ENCODE measurements at regions of chr17 and their contacts with region 1.

Region 1: DNA sequence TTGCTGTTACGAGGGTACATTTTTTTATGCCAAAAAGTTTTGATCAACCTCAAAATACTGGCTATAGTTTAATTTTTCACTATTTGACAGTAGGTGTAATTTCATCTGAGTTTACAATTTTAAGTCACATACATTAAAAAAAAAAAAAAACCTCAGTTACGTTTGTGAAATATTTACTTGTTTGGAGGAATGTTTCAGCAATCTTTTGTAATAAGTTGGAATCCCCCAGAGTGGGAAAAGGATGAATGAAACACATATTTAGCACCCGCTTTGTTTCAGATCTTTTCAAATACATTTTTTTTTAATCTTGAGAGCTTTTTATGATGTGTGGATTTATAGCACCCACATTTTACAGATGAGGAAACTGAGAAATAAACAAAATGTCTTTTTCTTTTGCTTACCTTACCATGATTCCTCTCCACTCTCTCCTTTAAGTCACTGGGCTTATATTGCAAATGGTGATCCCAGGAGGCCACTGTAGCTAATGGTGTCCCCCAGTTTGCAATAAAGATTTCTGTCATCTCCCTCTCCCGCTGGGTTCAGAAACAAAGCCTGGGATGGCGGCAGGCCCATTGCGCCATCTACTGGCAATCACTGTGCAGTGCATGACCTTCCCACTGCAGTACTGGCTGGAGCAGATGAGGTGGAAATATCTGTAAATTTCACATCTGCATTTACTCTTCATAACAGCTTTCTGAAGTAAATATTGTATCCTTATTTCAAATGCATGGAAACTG is 27.7 kb downstream of the TBC1D3B start:
- DNase-seq: peak; percentile 81
- ATAC-seq: peak; percentile 95
- H3K4me3 Mint-ChIP-seq: peak overlapping the region; percentile 50
- H3K27ac Mint-ChIP-seq: peak overlapping the region; percentile 67
- H3K4me1 Mint-ChIP-seq: peaks cover 44% of the 10 kb centered on the region
- H3K27me3 Mint-ChIP-seq: peaks cover 17% of the 10 kb centered on the region

Region 2: GRCh38 chr17:35841505-35841904 is 307.2 kb before region 1 on chr17:
- CTCF ChIA-PET with region 1: no interaction called
- DNase-seq: no peak
- ATAC-seq: no peak
- H3K4me3 Mint-ChIP-seq: no peak overlapping the region
- H3K27ac Mint-ChIP-seq: no peak overlapping the region
- H3K4me1 Mint-ChIP-seq: peaks cover 16% of the 10 kb centered on the region
- H3K27me3 Mint-ChIP-seq: no peaks in the 10 kb centered on the region

Region 3: DNA sequence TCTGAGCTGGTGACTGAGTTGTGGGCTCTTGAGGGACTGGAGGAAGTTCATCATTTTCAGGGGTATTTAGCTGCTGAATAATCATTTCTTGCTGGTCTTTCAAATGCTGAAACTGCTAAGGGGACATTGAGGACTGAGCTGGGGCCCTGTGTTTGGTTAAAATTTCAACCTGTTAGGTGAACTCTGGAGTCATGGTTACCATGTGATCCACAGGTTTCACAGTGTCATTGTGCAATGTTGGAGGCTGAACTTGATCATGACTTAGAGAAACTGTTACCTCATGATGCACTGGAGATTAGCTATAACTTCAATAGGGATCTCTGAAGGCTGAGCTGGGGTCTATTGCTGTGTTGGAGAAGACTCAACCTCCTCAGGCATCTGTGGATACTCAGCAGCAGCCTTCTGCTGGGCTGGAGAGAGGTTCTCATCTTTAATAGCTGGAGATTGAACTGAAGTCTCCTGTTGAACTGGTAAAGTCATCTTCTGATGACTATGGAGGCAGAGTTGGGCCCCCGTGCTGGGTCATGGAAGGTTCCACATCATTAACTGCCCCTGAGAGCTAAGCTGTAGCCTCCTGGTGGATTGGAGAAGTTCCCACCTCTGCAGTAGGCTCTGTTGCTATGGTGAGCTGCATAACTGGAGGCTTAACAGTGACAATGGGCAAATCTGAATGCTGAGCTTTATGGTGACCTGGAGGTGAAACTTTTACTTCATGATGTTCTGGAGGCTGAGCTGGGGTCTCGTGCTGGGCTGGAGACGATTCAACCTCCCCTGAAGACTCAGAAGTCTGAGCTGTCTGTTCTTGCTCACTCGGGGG is 233.4 kb before region 1 on chr17:
- CTCF ChIA-PET with region 1: no interaction called
- DNase-seq: no peak
- ATAC-seq: no peak
- H3K4me3 Mint-ChIP-seq: no peak overlapping the region
- H3K27ac Mint-ChIP-seq: no peak overlapping the region
- H3K4me1 Mint-ChIP-seq: peaks cover 43% of the 10 kb centered on the region
- H3K27me3 Mint-ChIP-seq: no peaks in the 10 kb centered on the region

Region 4: GRCh38 chr17:36004594-36005108 is 144.1 kb before region 1 on chr17:
- CTCF ChIA-PET with region 1: interaction called, 12 read pairs
- DNase-seq: no peak
- ATAC-seq: no peak
- H3K4me3 Mint-ChIP-seq: no peak overlapping the region
- H3K27ac Mint-ChIP-seq: peak overlapping the region; percentile 42
- H3K4me1 Mint-ChIP-seq: peaks cover 12% of the 10 kb centered on the region
- H3K27me3 Mint-ChIP-seq: no peaks in the 10 kb centered on the region

Region 5: GRCh38 chr17:36066365-36066985 is 82.3 kb before region 1 on chr17:
- CTCF ChIA-PET with region 1: interaction called, 16 read pairs
- DNase-seq: peak; percentile 88
- ATAC-seq: peak; percentile 87
- H3K4me3 Mint-ChIP-seq: peak overlapping the region; percentile 3
- H3K27ac Mint-ChIP-seq: peak overlapping the region; percentile 89
- H3K4me1 Mint-ChIP-seq: peaks cover 54% of the 10 kb centered on the region
- H3K27me3 Mint-ChIP-seq: peaks cover 3% of the 10 kb centered on the region

Region 6: GRCh38 chr17:36072431-36073121 is 76.2 kb before region 1 on chr17:
- CTCF ChIA-PET with region 1: interaction called, 48 read pairs
- DNase-seq: peak; percentile 88
- ATAC-seq: peak; percentile 79
- H3K4me3 Mint-ChIP-seq: peak overlapping the region; percentile 3
- H3K27ac Mint-ChIP-seq: peak overlapping the region; percentile 63
- H3K4me1 Mint-ChIP-seq: peaks cover 72% of the 10 kb centered on the region
- H3K27me3 Mint-ChIP-seq: peaks cover 7% of the 10 kb centered on the region

Region 7: GRCh38 chr17:36212966-36213365 is 64.2 kb after region 1 on chr17:
- CTCF ChIA-PET with region 1: no interaction called
- DNase-seq: no peak
- ATAC-seq: no peak
- H3K4me3 Mint-ChIP-seq: no peak overlapping the region
- H3K27ac Mint-ChIP-seq: no peak overlapping the region
- H3K4me1 Mint-ChIP-seq: peaks cover 54% of the 10 kb centered on the region
- H3K27me3 Mint-ChIP-seq: no peaks in the 10 kb centered on the region